Gastrocnemius medialis (tissue), 4 donors: ENCODE measurements at regions of chrX and their contacts with region 1.

Region 1: DNA sequence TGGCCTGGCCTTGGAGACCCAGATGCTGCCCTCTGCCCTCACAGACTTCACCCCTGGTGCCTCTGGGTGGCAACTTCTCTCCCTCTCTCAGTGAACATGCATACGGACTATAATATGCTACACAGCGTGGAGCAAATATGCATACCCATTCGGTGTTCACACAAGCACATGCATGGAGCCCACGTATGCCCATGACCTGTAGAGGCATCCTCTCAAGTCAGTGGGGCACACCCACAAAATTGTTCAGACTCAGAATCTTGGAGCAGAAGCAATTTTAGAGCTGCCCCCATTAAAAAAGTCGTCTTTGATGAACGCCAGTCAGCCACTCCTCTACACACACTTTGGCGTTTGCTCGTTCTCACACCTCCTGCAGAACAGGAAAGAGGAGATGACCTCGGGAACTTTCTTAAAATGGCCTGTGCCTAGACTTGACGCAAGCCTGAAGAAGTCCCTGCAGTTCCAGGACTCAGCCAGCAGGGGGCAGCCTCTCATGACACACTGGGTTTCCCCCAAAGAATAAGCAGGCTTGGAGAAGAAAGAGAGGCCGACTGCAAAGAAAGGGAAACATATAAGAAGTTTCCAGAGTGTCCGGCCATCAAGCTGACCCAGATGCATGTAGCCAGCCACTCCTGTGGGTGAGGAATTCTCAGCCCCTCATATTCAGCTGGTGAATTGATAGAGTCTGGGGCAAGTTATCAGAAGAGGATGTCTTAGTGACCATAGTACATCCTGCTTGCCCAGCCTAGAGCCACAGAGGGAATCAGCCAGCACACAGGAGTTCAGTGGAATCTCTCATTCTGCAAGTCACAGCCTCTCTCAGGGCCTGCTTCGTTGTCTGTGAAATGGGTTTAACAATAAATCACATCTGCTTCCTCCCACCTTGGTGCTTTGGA is 17.3 kb downstream of the APLN start:
- DNase-seq: peak; percentile 30 to 63
- ATAC-seq: peak; percentile 36 to 83
- H3K4me3 ChIP-seq: no peak overlapping the region
- H3K27ac ChIP-seq: no peak overlapping the region
- H3K4me1 ChIP-seq: no peaks in the 10 kb centered on the region
- H3K27me3 ChIP-seq: no peaks in the 10 kb centered on the region
- CTCF ChIP-seq: peak; percentile 60 to 88 (median 84)
- POLR2A ChIP-seq: no peak

Region 2: DNA sequence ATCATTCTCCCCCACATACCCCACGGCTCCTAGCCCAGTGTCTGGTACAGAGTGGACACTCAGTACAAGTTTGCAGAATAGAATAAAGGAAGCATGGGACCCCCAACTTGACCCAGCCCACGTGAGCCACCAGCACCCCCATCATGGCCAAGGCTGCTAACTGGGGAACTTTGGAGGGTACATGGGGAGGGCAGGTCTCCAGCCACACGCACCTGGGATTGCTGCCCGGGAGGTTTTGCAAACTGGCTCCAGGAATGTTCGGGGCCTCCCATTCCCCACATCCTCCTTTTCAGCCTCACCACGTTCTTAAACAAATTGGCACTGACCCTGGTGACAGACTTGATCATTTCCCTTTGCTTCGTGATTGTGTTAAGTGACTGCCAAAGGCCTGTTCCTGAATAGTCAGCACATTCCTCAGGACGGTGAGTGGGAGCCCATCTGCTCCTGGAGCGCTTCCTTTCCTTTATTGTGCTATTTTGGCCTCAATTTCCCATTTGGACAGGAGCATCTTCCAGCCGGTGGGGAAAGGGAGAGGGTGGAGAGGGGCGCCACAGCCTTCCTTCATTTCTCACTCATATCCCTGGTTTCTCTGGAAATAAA is 82.6 kb after region 1 on chrX:
- in situ Hi-C with region 1: loop called (anchors 5 to 10 kb)
- intact Hi-C with region 1: no loop called
- DNase-seq: no peak
- ATAC-seq: no peak
- H3K4me3 ChIP-seq: no peak overlapping the region
- H3K27ac ChIP-seq: no peak overlapping the region
- H3K4me1 ChIP-seq: peaks cover 0 to 5% of the 10 kb centered on the region in 2 donors
- H3K27me3 ChIP-seq: no peaks in the 10 kb centered on the region
- CTCF ChIP-seq: no peak
- POLR2A ChIP-seq: no peak

Region 3: DNA sequence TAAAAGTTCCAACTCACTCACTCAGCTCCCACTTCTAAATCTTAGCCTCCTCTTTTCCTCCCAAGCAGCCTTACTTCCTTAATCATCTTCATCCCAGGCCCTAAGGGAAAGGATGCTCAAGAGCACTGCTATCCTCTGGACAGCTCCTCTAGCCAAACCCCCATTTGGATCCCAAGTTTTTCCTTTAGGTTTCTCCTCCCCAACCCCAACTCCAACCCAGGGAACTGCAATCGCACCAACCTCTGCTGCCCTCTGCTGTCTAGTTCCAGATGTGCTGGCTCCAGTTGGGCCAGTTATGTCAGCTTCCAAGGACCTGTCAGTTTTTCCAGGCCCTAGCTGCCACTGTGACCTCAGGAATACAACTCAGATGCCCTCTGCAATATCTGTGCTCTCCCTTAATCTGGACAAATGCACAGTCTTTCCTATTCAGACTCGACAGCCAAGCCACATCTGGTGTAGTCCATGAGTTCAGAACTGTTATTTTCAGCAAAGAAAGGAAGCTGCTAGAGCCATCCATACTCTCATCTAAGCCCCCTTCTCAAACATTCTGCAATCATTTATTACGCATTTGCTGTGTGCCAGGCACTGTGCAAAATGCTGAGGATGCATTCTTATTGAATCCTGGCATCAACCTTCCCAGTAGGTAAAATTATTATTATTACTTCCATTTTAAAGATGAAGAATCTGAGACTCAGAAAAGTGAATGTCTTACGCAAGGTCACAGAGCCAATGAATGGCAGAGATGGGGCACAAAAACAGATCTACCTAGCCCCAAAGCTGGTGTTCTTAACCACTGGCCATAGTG is 89.0 kb after region 1 on chrX:
- in situ Hi-C with region 1: loop called (anchors 5 to 10 kb)
- intact Hi-C with region 1: loop called (anchors 1 kb)
- DNase-seq: peak; percentile 21 to 37
- ATAC-seq: peak; percentile 54 to 62
- H3K4me3 ChIP-seq: no peak overlapping the region
- H3K27ac ChIP-seq: no peak overlapping the region
- H3K4me1 ChIP-seq: no peaks in the 10 kb centered on the region
- H3K27me3 ChIP-seq: no peaks in the 10 kb centered on the region
- CTCF ChIP-seq: peak; percentile 54 to 78 (median 76)
- POLR2A ChIP-seq: no peak

Region 4: DNA sequence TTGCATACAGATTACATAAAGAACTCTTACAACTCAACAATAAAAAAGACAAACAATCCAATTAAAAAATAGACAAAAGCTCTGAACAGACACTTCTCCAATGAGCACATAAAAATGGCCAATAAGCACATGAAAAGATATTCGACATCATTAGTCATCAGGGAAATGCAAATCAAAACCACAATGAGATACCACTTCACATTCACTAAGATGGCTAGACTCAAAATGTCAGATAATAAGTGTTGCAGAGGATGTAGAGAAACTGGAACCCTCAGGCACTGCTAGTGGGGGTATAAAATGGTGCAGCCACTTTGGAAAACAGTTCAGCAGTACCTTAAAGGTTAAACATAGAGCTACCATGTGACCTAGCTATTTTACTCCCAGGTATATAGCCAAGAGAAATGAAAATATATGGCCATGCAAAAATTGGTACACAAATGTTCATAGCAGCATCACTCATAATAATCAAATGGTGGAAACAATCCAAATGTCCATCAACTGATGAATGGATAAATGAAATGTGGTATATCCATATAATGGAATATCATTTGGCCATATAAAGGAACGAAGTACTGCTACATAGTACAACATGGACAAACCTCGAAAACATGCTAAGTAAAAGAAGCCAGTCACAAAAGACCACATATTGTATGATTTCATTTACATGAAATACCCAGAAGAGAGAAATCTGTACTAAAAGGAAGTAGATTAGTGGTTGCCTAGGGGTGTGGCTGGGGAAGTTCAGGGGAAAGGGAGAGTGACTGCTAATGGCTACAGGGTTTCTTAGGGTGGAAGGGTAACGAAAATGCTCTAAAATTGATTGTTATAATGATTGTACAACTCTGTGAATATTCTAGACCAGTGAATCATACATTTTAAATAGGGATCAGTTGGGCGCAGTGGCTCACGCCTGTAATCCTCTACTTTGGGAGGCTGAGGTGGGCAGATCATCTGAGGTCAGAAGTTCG is 171.7 kb after region 1 on chrX:
- in situ Hi-C with region 1: no loop called
- intact Hi-C with region 1: no loop called
- DNase-seq: no peak
- ATAC-seq: no peak
- H3K4me3 ChIP-seq: no peak overlapping the region
- H3K27ac ChIP-seq: peak overlapping the region in 3 of 4 donors; percentile 10 to 57 (median 31)
- H3K4me1 ChIP-seq: no peaks in the 10 kb centered on the region
- H3K27me3 ChIP-seq: no peaks in the 10 kb centered on the region
- CTCF ChIP-seq: no peak
- POLR2A ChIP-seq: no peak

Region 5: GRCh38 chrX:129843459-129844306 is 206.2 kb after region 1 on chrX and contains the start of gene ZDHHC9:
- in situ Hi-C with region 1: loop called in 1 of 4 experiments (anchors 25 kb)
- intact Hi-C with region 1: no loop called
- DNase-seq: peak; percentile 77 to 84
- ATAC-seq: peak; percentile 94 to 95
- H3K4me3 ChIP-seq: peak within 1 kb of the TSS; percentile 68 to 77 (median 72)
- H3K27ac ChIP-seq: peak within 1 kb of the TSS; percentile 76 to 89 (median 84)
- H3K4me1 ChIP-seq: no peaks in the 10 kb centered on the region
- H3K27me3 ChIP-seq: no peaks in the 10 kb centered on the region
- CTCF ChIP-seq: peak in 1 of 5 experiments; percentile 21
- POLR2A ChIP-seq: peak; percentile 54 to 61
- total RNA-seq, gene ZDHHC9: 7.9 to 25.3 (median 14.7) TPM

Region 6: GRCh38 chrX:129980540-129981199 is 343.2 kb after region 1 on chrX:
- in situ Hi-C with region 1: no loop called
- intact Hi-C with region 1: no loop called
- DNase-seq: no peak
- ATAC-seq: peak; percentile 10 to 13
- H3K4me3 ChIP-seq: peak overlapping the region in 1 of 4 donors; percentile 65
- H3K27ac ChIP-seq: peak overlapping the region in 3 of 4 donors; percentile 71 to 81 (median 76)
- H3K4me1 ChIP-seq: peaks cover 0 to 10% of the 10 kb centered on the region in 2 donors
- H3K27me3 ChIP-seq: no peaks in the 10 kb centered on the region
- CTCF ChIP-seq: no peak
- POLR2A ChIP-seq: peak; percentile 28 to 57